HEK293 (cell line): ENCODE measurements at regions of chr1 and their contacts with region 1.

Region 1: DNA sequence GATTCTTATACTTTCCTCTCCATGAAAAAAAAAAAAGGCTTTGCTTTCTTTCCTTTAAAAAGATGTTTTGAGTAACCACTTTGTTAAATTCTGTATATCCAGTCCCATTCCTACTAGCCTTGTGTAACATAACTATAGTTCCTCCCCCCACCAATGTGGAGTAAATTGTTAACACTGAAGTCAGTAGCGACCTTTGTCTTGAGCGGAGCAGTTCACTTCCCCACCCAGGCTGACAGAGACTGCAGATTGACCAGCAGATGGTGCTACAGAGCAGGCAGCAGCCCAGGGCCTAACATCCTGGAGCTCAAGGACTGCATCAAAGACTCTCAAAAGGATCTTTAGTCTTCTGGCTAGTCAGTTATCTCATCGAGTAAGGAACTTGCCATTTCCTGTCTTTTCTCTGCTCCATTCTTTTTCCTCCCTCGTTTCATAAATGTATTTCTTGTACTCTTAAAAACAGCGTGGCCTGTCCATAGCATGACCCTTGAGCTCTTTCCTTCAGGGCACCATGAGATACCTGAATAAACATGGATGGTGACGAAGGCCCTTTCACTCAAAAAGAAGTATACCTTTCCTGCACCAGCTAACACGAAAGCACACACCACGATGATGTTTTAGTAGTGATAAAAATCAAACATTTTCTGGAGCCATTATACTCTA is 503.5 kb upstream of the PKN2 start:
- H3K4me3 ChIP-seq: no peak overlapping the region
- H3K27ac ChIP-seq: no peak overlapping the region
- H3K4me1 ChIP-seq: no peaks in the 10 kb centered on the region
- CTCF ChIP-seq: peak; percentile 60

Region 2: DNA sequence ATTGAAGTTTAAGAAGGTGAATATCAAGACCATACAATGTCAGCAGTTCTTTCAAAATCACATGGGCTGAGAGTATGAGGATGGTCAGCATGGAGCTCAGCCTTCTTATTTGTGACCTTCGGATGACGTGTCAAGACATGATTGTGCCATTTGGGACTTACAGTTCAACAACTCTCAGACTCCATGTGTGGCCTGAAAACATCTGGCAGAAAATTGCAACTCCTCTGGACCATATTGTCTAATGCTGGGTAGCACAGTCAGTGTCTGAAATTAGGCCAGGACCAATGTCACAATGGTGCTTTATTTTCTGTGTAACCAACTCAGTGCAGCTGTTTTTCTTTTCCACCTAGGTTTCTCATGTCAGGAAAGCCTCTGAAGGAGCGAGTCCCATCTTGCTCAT is 20.0 kb after region 1 on chr1:
- CTCF ChIA-PET with region 1: interaction called, 14 read pairs
- POLR2A ChIA-PET with region 1: no interaction called
- H3K4me3 ChIP-seq: no peak overlapping the region
- H3K27ac ChIP-seq: no peak overlapping the region
- H3K4me1 ChIP-seq: no peaks in the 10 kb centered on the region
- CTCF ChIP-seq: no peak

Region 3: DNA sequence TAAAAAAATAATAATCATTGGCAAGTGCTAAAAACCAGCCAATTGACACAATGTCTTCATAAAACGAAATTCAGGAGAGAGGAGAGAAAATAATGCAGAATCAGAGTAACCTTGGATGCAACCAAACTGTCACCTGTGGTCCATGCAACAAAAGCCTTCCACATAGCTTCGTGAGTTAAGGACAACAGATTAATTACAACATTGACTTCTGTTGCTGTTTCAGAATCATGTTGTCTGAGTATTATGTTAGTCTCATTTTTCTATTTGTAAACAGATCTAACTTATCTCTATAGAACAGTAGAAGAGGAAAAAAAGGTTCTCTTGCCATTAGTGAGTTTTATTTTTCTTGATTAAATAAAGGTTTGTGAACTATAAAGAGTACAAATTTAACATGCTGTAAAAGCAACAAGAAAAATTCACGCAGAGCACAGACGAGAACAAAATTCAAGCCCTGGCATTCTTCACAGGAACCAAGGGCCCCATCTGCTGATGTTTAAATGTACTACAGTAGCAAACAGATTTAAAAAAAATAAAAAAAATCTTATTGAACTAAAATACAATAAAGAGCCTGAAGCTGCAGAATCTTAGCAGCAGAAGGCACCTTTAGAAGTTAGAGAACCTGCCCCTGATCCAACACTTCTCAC is 122.4 kb after region 1 on chr1:
- CTCF ChIA-PET with region 1: interaction called, 16 read pairs
- POLR2A ChIA-PET with region 1: no interaction called
- H3K4me3 ChIP-seq: no peak overlapping the region
- H3K27ac ChIP-seq: no peak overlapping the region
- H3K4me1 ChIP-seq: no peaks in the 10 kb centered on the region
- CTCF ChIP-seq: no peak

Region 4: DNA sequence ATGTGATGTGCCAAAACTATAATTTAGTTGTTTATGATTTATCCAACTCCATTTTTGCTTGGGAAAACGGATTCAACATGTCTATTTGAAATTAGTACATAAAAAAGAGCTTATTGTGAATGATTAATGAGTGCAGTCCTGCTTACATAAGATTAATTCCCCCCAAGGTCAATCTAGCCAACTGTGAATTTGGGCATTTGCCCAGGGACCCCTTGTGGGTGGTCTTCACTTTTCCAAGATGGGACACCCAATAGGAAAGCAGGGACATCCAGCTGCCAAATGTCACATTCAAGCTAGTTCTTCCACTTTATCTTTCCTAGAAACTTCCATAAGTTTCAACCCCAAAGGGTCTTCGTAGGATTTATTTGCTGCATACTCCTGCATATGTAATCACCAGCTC is 141.1 kb after region 1 on chr1:
- CTCF ChIA-PET with region 1: no interaction called
- POLR2A ChIA-PET with region 1: no interaction called
- H3K4me3 ChIP-seq: no peak overlapping the region
- H3K27ac ChIP-seq: no peak overlapping the region
- H3K4me1 ChIP-seq: no peaks in the 10 kb centered on the region
- CTCF ChIP-seq: no peak

Region 5: DNA sequence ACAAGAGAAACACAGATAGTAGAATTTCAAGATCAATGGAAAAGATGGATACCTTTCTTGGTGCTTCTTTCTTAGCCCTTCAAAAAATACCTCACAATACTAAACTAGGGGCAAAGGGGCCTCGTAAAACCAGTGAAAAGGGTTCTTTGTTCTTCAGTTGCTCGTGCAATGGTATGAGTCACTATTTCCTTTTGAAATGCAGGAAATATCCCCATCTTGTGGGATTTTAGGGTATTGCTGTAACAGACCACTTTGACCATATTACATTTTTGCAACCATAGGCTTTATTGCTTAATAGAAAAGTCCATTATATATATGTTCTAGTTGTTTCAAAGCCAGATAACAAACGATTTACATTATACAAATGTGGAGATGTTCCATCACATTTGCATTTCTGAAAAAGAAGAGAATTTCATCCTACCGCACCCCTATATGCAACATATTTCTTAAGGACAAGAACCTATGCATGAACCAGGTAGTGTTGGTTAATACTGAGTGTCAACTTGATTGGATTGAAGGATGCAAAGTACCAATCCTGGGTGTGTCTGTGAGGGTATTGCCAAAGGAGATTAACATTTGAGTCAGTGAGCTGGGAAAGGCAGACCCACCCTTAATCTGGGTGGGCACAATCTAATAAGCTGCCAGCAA is 414.9 kb after region 1 on chr1:
- CTCF ChIA-PET with region 1: interaction called, 17 read pairs
- POLR2A ChIA-PET with region 1: no interaction called
- H3K4me3 ChIP-seq: no peak overlapping the region
- H3K27ac ChIP-seq: no peak overlapping the region
- H3K4me1 ChIP-seq: no peaks in the 10 kb centered on the region
- CTCF ChIP-seq: no peak